Natural killer cell (primary cell): ENCODE measurements at regions of chr6 and their contacts with region 1.

Region 1: GRCh38 chr6:26175428-26176181 is 88.4 kb downstream of the HFE start:
- DNase-seq: peak in 1 of 2 donors; percentile 87
- ATAC-seq: no peak
- H3K4me3 ChIP-seq: no peak overlapping the region
- H3K4me3 Mint-ChIP-seq: peak overlapping the region; percentile 78
- H3K27ac ChIP-seq: peak overlapping the region; percentile 6
- H3K27ac Mint-ChIP-seq: peak overlapping the region; percentile 77 to 83
- H3K4me1 ChIP-seq: peaks cover 17% of the 10 kb centered on the region
- H3K4me1 Mint-ChIP-seq: peaks cover 37 to 39% of the 10 kb centered on the region in 2 donors
- H3K27me3 ChIP-seq: no peaks in the 10 kb centered on the region
- H3K27me3 Mint-ChIP-seq: no peaks in the 10 kb centered on the region
- CTCF ChIP-seq: peak; percentile 86

Region 2: DNA sequence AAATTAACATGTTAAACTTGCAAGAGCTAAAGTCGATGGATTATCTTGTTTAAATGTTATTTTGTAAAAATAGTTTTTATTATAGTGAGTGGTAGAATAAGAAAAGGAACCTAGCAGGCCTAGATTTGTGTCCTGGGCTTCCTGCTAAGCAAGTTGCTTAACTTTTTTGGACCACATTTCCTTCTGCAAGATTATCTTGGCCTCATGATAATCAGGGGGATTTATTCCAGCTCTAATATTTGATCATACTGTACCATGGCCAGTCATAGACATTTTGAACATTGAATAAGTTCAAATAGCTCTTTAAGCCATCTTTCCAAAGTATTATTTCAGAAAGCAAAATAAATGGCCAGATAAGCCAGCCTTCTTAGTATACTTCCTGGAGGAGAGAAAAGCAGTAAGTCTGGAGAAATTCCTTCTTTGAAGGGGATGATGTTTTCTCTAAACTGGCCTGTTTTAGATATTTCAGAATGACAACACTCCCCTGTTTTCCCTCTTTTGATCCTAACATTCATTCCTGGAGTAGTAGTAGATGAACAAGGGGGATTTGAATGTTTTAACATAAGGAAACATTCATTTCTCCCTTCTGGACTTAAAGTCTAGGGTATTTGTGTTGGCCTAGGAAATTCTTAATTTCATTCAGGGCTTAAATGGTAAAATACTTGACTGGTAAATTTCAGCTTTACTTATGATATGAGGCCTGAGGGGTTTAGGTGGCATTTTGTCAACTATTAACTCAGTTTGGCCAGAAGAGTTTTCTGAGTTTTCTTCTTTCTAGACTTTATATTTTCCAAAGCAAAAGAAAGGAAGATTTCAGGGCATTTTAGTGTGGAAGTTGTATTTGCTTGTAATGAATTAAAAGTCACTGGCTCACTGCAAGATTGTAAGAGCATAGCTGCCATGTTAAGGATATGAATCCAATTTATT is 632.4 kb before region 1 on chr6:
- intact Hi-C with region 1: no loop called
- DNase-seq: no peak
- ATAC-seq: no peak
- H3K4me3 ChIP-seq: no peak overlapping the region
- H3K4me3 Mint-ChIP-seq: no peak overlapping the region
- H3K27ac ChIP-seq: no peak overlapping the region
- H3K27ac Mint-ChIP-seq: no peak overlapping the region
- H3K4me1 ChIP-seq: no peaks in the 10 kb centered on the region
- H3K4me1 Mint-ChIP-seq: no peaks in the 10 kb centered on the region
- H3K27me3 ChIP-seq: no peaks in the 10 kb centered on the region
- H3K27me3 Mint-ChIP-seq: peaks cover 0 to 22% of the 10 kb centered on the region in 2 donors
- CTCF ChIP-seq: no peak

Region 3: DNA sequence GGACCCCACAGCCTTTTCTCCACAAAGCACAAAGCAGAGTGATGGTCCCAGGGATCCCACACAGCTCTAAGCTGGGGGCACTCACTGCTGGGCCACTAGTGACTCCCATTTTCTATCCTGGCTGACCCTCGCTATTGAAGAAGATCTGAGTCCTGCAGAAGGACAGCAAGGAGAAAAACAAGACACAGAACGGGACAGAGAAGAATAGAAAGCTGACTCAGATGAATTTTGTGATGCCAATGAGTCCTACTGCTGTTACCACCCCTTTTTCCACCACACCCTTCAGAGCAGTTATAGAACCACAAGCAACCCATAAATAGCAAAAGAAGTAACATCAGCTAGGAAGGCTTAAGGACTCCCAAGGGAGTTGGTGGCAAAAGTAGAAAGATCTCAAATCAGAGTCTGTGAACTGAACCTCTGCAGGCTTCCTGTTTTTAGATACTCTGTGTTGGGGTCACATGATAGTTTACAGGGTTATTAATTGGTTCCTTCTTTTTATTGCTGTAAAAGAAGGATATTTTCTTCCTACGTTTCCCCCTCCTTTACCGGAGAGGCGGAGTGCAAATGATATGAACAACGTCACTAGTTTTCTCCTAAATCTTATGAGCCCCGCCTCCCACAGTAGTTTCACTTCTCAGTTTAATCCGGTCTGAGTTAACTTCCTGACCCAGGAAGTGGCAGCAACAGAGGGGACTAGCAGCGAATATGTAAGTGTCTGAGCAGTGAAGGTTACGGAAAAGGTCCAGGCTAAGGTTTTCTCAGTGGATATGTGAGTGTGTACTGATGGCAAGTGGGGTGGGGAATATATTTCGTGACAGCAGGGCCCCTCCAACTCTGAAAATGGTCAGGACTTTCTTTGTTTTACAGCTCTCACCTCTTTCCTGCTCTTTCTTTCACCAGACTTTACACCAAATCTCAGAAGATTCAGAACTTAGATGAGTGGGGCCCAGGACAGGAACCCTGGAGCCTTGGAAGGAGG is 213.2 kb before region 1 on chr6 and contains the start of gene TRIM38:
- intact Hi-C with region 1: no loop called
- DNase-seq: peak; percentile 48 to 93
- ATAC-seq: peak; percentile 94 to 95 (median 94)
- H3K4me3 ChIP-seq: peak within 1 kb of the TSS; percentile 88
- H3K4me3 Mint-ChIP-seq: peak within 1 kb of the TSS; percentile 98
- H3K27ac ChIP-seq: peak within 1 kb of the TSS; percentile 97
- H3K27ac Mint-ChIP-seq: peak within 1 kb of the TSS; percentile 96 to 99
- H3K4me1 ChIP-seq: peaks cover 52% of the 10 kb centered on the region
- H3K4me1 Mint-ChIP-seq: peaks cover 68 to 71% of the 10 kb centered on the region in 2 donors
- H3K27me3 ChIP-seq: no peaks in the 10 kb centered on the region
- H3K27me3 Mint-ChIP-seq: no peaks in the 10 kb centered on the region
- CTCF ChIP-seq: no peak
- total RNA-seq, gene TRIM38: 25.5 to 30.5 (median 27.1) TPM

Region 4: DNA sequence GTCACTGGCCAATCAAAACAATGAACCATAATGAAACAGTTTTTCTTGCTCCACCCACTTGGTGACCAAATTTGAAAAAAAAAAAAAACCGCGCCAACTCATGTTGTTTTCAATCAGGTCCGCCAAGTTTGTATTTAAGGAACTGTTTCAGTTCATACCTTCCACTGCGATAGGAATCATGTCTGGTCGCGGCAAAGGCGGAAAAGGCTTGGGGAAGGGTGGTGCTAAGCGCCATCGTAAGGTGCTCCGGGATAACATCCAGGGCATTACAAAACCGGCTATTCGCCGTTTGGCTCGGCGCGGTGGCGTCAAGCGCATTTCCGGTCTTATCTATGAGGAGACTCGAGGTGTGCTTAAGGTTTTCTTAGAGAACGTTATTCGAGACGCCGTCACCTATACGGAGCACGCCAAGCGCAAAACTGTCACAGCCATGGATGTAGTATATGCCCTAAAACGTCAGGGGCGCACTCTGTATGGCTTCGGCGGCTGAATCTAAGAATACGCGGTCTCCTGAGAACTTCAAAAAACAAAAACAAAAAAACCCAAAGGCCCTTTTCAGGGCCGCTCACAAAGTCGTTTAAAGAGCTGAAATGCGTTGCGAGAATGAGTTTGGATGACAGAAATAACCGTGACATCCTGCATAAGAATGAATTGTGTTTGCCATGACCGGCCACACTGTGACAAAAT is 71.7 kb before region 1 on chr6:
- intact Hi-C with region 1: loop called (anchors 5 kb)
- DNase-seq: peak; percentile 86 to 95
- ATAC-seq: peak; percentile 87 to 96 (median 88)
- H3K4me3 ChIP-seq: peak overlapping the region; percentile 41
- H3K4me3 Mint-ChIP-seq: peak overlapping the region; percentile 90
- H3K27ac ChIP-seq: peak overlapping the region; percentile 84
- H3K27ac Mint-ChIP-seq: peak overlapping the region; percentile 98 to 99
- H3K4me1 ChIP-seq: peaks cover 10% of the 10 kb centered on the region
- H3K4me1 Mint-ChIP-seq: peaks cover 18% of the 10 kb centered on the region in 2 donors
- H3K27me3 ChIP-seq: no peaks in the 10 kb centered on the region
- H3K27me3 Mint-ChIP-seq: no peaks in the 10 kb centered on the region
- CTCF ChIP-seq: peak; percentile 41

Region 5: GRCh38 chr6:26216356-26216885 is 40.8 kb after region 1 on chr6:
- intact Hi-C with region 1: loop called (anchors 1 kb)
- DNase-seq: peak; percentile 68 to 94
- ATAC-seq: peak; percentile 77 to 92 (median 79)
- H3K4me3 ChIP-seq: peak overlapping the region; percentile 63
- H3K4me3 Mint-ChIP-seq: no peak overlapping the region
- H3K27ac ChIP-seq: peak overlapping the region; percentile 91
- H3K27ac Mint-ChIP-seq: no peak overlapping the region
- H3K4me1 ChIP-seq: peaks cover 27% of the 10 kb centered on the region
- H3K4me1 Mint-ChIP-seq: no peaks in the 10 kb centered on the region
- H3K27me3 ChIP-seq: no peaks in the 10 kb centered on the region
- H3K27me3 Mint-ChIP-seq: no peaks in the 10 kb centered on the region
- CTCF ChIP-seq: no peak

Region 6: GRCh38 chr6:26285143-26286134 is 109.8 kb after region 1 on chr6:
- intact Hi-C with region 1: loop called (anchors 1 kb)
- DNase-seq: peak; percentile 83 to 98
- ATAC-seq: peak; percentile 76 to 93 (median 83)
- H3K4me3 ChIP-seq: peak overlapping the region; percentile 70
- H3K4me3 Mint-ChIP-seq: peak overlapping the region; percentile 95
- H3K27ac ChIP-seq: peak overlapping the region; percentile 97
- H3K27ac Mint-ChIP-seq: peak overlapping the region; percentile 98
- H3K4me1 ChIP-seq: peaks cover 17% of the 10 kb centered on the region
- H3K4me1 Mint-ChIP-seq: peaks cover 34 to 37% of the 10 kb centered on the region in 2 donors
- H3K27me3 ChIP-seq: no peaks in the 10 kb centered on the region
- H3K27me3 Mint-ChIP-seq: peaks cover 3 to 8% of the 10 kb centered on the region in 2 donors
- CTCF ChIP-seq: no peak

Region 7: DNA sequence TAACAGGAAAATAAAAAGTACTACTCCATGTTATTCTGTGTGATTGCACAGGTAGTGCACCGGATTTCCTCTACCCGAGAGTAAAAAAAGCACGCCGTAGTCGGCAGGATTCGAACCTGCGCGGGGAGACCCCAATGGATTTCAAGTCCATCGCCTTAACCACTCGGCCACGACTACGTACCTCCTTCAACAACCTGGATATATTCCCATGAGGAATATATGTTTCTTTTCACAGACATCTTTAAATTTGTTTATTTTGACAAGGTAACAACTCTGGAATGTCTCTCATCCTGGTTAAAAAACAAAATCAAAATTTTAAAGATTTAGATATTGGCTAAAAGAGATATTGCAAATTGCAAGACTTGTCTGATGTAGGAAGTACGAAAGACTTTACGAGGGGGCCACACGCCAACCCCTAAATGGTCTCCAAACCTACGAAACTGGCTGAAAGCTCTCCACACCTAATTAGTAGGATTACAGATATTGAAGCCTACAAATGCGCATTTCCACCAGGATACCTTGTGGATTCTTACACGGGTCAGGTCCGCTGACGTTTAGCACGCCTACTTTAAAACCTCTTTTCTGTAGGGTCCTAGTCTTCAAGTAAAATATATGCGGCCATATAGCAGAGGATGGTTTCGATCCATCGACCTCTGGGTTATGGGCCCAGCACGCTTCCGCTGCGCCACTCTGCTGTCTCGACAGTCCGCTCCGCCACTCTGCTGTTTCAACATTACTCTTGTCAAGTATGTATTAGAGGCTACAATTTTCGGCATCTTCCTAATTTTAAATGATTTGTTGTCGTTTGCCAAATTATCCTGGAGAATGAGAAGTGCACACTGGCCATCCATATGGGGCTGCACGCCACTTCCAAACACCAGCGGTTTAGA is 137.1 kb after region 1 on chr6:
- intact Hi-C with region 1: loop called (anchors 2 kb)
- DNase-seq: peak; percentile 79 to 93
- ATAC-seq: peak; percentile 52 to 75 (median 68)
- H3K4me3 ChIP-seq: peak overlapping the region; percentile 59
- H3K4me3 Mint-ChIP-seq: peak overlapping the region; percentile 98
- H3K27ac ChIP-seq: peak overlapping the region; percentile 36
- H3K27ac Mint-ChIP-seq: peak overlapping the region; percentile 98 to 99
- H3K4me1 ChIP-seq: peaks cover 20% of the 10 kb centered on the region
- H3K4me1 Mint-ChIP-seq: peaks cover 58% of the 10 kb centered on the region in 2 donors
- H3K27me3 ChIP-seq: no peaks in the 10 kb centered on the region
- H3K27me3 Mint-ChIP-seq: peaks cover 6 to 13% of the 10 kb centered on the region in 2 donors
- CTCF ChIP-seq: no peak

Region 8: DNA sequence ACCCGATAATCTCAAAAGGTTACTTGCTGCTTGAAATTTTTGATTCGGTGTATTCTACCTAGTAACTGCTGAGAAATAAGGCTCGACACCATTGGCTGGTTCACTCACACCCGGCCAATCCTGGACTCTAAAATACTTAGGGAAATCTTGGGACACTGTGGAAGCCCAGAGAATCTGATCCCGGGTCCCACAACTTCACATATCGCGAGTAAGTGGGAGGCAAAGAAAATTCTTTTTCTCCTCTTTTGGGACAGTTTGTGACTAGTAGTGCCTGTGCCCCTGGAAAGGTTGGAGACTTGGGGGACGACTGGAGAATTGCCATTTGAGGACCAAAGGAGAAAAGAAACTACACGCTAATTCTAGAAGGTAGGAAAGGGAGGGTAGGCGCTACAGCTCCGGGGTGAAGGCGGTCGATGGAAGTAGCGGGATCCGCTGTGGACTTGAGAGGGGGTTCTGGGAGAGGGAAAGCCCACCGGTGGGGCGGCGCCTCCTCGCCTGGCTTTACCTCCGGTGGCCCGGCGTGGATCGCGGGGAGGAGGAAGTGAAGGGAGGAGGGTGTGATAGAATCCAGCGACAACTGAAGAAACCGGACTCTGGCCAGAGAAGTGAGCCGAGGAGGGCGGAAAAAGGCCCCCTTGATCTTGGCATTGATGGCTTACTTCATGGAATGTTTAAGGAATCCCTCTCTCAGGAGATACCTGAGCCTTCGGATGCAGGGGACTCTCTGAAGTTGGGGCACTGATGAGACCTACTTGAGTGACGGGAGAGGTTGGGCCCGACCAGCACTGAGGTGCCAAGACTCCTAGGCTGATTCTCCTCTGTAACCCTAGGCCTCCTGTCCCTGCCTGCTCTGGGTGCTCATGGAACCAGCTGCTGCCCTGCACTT is 245.9 kb after region 1 on chr6:
- intact Hi-C with region 1: loop called (anchors 5 kb)
- DNase-seq: peak; percentile 33 to 84
- ATAC-seq: peak; percentile 93 to 97 (median 95)
- H3K4me3 ChIP-seq: peak overlapping the region; percentile 83
- H3K4me3 Mint-ChIP-seq: no peak overlapping the region
- H3K27ac ChIP-seq: peak overlapping the region; percentile 64
- H3K27ac Mint-ChIP-seq: no peak overlapping the region
- H3K4me1 ChIP-seq: peaks cover 12% of the 10 kb centered on the region
- H3K4me1 Mint-ChIP-seq: peaks cover 0 to 7% of the 10 kb centered on the region in 2 donors
- H3K27me3 ChIP-seq: no peaks in the 10 kb centered on the region
- H3K27me3 Mint-ChIP-seq: no peaks in the 10 kb centered on the region
- CTCF ChIP-seq: no peak

Region 9: DNA sequence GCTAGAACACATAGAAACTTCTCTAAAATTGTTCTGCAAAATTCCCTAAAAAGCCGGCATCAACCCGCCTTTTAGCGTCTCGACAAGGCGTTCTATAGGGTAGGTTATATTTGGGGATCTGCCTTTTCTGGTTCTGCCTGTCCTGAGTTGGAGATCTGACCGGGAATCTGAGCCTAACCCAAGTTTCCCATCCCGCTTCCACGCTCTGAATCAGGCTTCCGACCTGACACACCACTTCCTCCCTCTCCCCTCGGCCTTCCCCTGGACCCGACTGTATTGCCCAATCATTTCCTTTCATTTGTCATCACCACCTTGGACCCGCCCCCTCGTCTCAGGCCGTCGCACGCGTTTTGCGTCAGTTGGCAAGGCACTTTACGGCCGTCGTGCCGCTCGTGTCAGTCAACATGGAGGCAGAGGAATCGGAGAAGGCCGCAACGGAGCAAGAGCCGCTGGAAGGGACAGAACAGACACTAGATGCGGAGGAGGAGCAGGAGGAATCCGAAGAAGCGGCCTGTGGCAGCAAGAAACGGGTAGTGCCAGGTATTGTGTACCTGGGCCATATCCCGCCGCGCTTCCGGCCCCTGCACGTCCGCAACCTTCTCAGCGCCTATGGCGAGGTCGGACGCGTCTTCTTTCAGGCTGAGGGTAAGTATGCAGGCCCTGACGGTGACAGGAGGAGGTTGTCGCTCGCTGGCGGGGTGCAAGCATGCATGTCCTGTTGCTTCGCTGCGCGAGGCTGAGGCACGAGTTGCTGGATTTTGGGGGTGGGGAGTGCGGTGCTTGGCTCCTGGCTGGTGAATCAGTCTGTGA is 421.2 kb after region 1 on chr6 and contains the start of gene ABT1:
- intact Hi-C with region 1: loop called (anchors 1 kb)
- DNase-seq: peak; percentile 96 to 98
- ATAC-seq: peak; percentile 88 to 96 (median 90)
- H3K4me3 ChIP-seq: peak within 1 kb of the TSS; percentile 79
- H3K4me3 Mint-ChIP-seq: no peak within 1 kb of the TSS
- H3K27ac ChIP-seq: peak within 1 kb of the TSS; percentile 92
- H3K27ac Mint-ChIP-seq: no peak within 1 kb of the TSS
- H3K4me1 ChIP-seq: peaks cover 18% of the 10 kb centered on the region
- H3K4me1 Mint-ChIP-seq: peaks cover 6 to 10% of the 10 kb centered on the region in 2 donors
- H3K27me3 ChIP-seq: peaks cover 20% of the 10 kb centered on the region
- H3K27me3 Mint-ChIP-seq: peaks cover 0 to 15% of the 10 kb centered on the region in 2 donors
- CTCF ChIP-seq: no peak
- total RNA-seq, gene ABT1: 23.9 to 30.7 (median 29.9) TPM